ENCODE measurements at regions of chr16 and their contacts with region 1.

Region 1: DNA sequence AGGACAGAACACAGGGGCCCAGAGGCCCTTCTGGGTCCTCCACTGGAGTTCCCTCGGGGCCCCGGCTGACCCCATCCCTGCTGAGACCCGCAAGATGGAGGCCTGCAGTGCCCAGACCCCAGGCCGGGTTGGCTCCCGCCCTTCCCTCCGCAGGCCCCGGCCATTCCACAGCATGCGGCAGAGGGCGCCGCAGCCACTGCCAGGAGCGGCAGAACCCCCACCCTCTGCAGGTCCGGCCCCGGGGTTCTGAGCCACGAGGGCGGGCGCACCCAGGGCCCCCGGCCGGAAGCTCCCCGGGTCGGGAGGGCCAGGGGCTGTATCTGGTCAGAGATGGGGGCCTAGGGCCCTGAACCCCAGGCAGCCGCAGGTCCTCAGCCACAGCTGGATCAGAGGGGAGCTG is 2.4 kb upstream of the PERCC1 start:
- DNase-seq: no peak
- H3K4me3 ChIP-seq: peak overlapping the region in 3 of 59 donors; percentile 14 to 31 (median 22)
- H3K27ac ChIP-seq: no peak overlapping the region
- H3K27me3 ChIP-seq: no peaks in the 10 kb centered on the region
- CTCF ChIP-seq: peak in 8 of 56 donors; percentile 7 to 23 (median 16)

Region 2: GRCh38 chr16:684067-684794 is 744.3 kb before region 1 on chr16 and contains the start of gene JMJD8:
- intact Hi-C with region 1: loop called in 1 of 2 experiments (anchors 10 kb)
- DNase-seq: peak; percentile 93 to 99 (median 96)
- H3K4me3 ChIP-seq: peak within 1 kb of the TSS; percentile 10 to 93 (median 70)
- H3K27ac ChIP-seq: peak within 1 kb of the TSS in 53 of 59 donors; percentile 27 to 89 (median 77)
- H3K27me3 ChIP-seq: no peaks in the 10 kb centered on the region
- CTCF ChIP-seq: peak in 13 of 56 donors; percentile 10 to 43 (median 21)
- total RNA-seq, gene JMJD8: 19.0 to 50.5 (median 30.3) TPM

Region 3: GRCh38 chr16:1763521-1764511 is 335.3 kb after region 1 on chr16:
- intact Hi-C with region 1: loop called in 1 of 2 experiments (anchors 10 kb)
- DNase-seq: peak in 3 of 10 donors; percentile 28 to 79 (median 43)
- H3K4me3 ChIP-seq: no peak overlapping the region
- H3K27ac ChIP-seq: peak overlapping the region in 40 of 59 donors; percentile 1 to 97 (median 52)
- H3K27me3 ChIP-seq: no peaks in the 10 kb centered on the region
- CTCF ChIP-seq: peak in 52 of 56 donors; percentile 13 to 59 (median 37)

Region 4: GRCh38 chr16:1959269-1960049 is 530.9 kb after region 1 on chr16 and contains the start of gene NDUFB10:
- intact Hi-C with region 1: loop called in 1 of 2 experiments (anchors 10 kb)
- DNase-seq: peak; percentile 79 to 97 (median 89)
- H3K4me3 ChIP-seq: peak within 1 kb of the TSS; percentile 63 to 100 (median 95)
- H3K27ac ChIP-seq: peak within 1 kb of the TSS; percentile 57 to 97 (median 90)
- H3K27me3 ChIP-seq: no peaks in the 10 kb centered on the region
- CTCF ChIP-seq: peak; percentile 52 to 97 (median 88)
- total RNA-seq, gene NDUFB10: 74.8 to 178 (median 131) TPM